Mammary epithelial cell (primary cell): ENCODE measurements at regions of chrX and their contacts with region 1.

Region 1: GRCh38 chrX:50100188-50100587 is 100.6 kb downstream of the AKAP4 start:
- DNase-seq: peak; percentile 2
- H3K4me3 ChIP-seq: no peak overlapping the region
- H3K27ac ChIP-seq: no peak overlapping the region
- H3K4me1 ChIP-seq: no peaks in the 10 kb centered on the region
- H3K27me3 ChIP-seq: no peaks in the 10 kb centered on the region
- CTCF ChIP-seq: peak; percentile 9 to 38

Region 2: GRCh38 chrX:50448565-50448964 is 348.4 kb after region 1 on chrX:
- CTCF ChIA-PET with region 1: interaction called, 3 read pairs
- dilution Hi-C with region 1: no loop called
- in situ Hi-C with region 1: no loop called
- intact Hi-C with region 1: loop called (anchors 5 kb)
- DNase-seq: peak; percentile 78
- H3K4me3 ChIP-seq: no peak overlapping the region
- H3K27ac ChIP-seq: no peak overlapping the region
- H3K4me1 ChIP-seq: no peaks in the 10 kb centered on the region
- H3K27me3 ChIP-seq: no peaks in the 10 kb centered on the region
- CTCF ChIP-seq: peak; percentile 57 to 61

Region 3: GRCh38 chrX:50579955-50580354 is 479.8 kb after region 1 on chrX:
- CTCF ChIA-PET with region 1: no interaction called
- dilution Hi-C with region 1: no loop called
- in situ Hi-C with region 1: no loop called
- intact Hi-C with region 1: loop called (anchors 1 kb)
- DNase-seq: peak; percentile 53
- H3K4me3 ChIP-seq: no peak overlapping the region
- H3K27ac ChIP-seq: no peak overlapping the region
- H3K4me1 ChIP-seq: no peaks in the 10 kb centered on the region
- H3K27me3 ChIP-seq: peaks cover 2% of the 10 kb centered on the region
- CTCF ChIP-seq: peak; percentile 63 to 68